ENCODE measurements at regions of chr9 and their contacts with region 1.

Region 1: GRCh38 chr9:96674914-96675538 is 19.9 kb upstream of the PRXL2C start:
- DNase-seq: peak; percentile 71
- ATAC-seq: peak; percentile 85
- H3K4me3 ChIP-seq: no peak overlapping the region
- H3K27ac ChIP-seq: peak overlapping the region; percentile 78
- H3K4me1 ChIP-seq: peaks cover 18% of the 10 kb centered on the region
- H3K27me3 ChIP-seq: no peaks in the 10 kb centered on the region
- CTCF ChIP-seq: no peak

Region 2: GRCh38 chr9:96587338-96588315 is 87.4 kb before region 1 on chr9:
- CTCF ChIA-PET with region 1: no interaction called
- POLR2A ChIA-PET with region 1: no interaction called
- intact Hi-C with region 1: no loop called
- DNase-seq: no peak
- ATAC-seq: no peak
- H3K4me3 ChIP-seq: no peak overlapping the region
- H3K27ac ChIP-seq: no peak overlapping the region
- H3K4me1 ChIP-seq: no peaks in the 10 kb centered on the region
- H3K27me3 ChIP-seq: no peaks in the 10 kb centered on the region
- CTCF ChIP-seq: no peak

Region 3: DNA sequence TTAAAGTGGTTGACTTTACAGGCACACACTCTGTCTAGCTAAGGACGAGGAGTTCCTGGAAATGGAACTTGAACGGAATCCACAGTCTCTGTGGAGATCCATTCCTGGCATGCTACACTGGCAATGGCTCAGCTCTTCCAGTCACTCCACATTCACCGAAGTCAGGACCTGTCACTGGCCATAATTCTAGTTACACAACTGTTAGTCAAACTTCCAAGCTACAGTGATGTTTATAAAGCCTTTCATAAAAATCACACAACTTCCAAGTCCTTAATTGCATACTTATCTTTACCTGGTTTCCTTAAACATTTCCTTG is 71.1 kb before region 1 on chr9:
- CTCF ChIA-PET with region 1: no interaction called
- POLR2A ChIA-PET with region 1: interaction called, 14 read pairs
- intact Hi-C with region 1: no loop called
- DNase-seq: no peak
- ATAC-seq: no peak
- H3K4me3 ChIP-seq: no peak overlapping the region
- H3K27ac ChIP-seq: no peak overlapping the region
- H3K4me1 ChIP-seq: no peaks in the 10 kb centered on the region
- H3K27me3 ChIP-seq: no peaks in the 10 kb centered on the region
- CTCF ChIP-seq: no peak